ENCODE measurements at regions of chr5 and their contacts with region 1.

Region 1: DNA sequence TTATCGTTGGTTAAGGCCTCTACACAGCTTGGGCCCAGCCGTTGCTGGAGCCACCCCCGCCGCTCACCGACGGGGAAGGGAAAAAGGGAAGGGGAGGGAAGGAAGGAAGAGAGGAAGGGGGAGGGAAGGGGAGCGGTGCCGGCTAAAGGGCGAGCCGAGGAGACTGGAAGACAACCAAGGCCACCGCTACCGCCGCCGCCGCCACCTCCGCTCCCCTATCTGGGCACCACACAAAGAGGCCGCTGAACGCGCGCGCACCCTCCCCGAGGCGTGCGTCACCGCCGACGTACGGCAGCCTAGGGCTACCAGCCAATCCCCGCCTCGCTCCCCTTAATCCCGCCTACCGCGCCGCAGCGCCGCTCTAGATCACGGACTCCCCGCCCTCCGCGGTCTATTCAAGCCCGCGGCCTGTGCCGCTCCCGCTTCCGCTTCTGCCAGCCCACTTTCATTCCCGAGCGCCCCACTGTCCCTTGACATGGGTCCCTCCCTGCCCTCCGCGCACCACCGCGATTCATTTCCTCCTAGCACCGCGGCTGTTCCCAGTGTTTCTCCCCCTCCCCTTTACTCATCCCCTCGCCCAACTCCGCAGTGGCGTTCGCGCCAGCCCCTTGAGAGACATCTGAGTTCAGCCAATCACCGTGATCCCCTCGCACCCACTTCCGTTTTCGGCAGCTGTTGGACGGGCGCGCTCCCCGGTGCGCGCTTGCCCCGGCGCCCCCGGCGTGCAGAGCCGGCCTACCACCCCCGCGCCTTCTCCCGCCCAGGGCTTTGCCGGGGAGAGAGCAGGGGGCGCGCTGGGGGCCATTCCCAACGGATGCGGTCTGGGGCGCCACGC is at the start of gene HNRNPA0:
- DNase-seq: peak; percentile 98
- H3K4me3 Mint-ChIP-seq: peak within 1 kb of the TSS; percentile 87
- H3K27ac Mint-ChIP-seq: peak within 1 kb of the TSS; percentile 99
- H3K4me1 Mint-ChIP-seq: peaks cover 28% of the 10 kb centered on the region
- H3K27me3 Mint-ChIP-seq: no peaks in the 10 kb centered on the region
- CTCF ChIP-seq: no peak
- total RNA-seq, gene HNRNPA0: 30.8 and 31.8 TPM in 2 replicates

Region 2: DNA sequence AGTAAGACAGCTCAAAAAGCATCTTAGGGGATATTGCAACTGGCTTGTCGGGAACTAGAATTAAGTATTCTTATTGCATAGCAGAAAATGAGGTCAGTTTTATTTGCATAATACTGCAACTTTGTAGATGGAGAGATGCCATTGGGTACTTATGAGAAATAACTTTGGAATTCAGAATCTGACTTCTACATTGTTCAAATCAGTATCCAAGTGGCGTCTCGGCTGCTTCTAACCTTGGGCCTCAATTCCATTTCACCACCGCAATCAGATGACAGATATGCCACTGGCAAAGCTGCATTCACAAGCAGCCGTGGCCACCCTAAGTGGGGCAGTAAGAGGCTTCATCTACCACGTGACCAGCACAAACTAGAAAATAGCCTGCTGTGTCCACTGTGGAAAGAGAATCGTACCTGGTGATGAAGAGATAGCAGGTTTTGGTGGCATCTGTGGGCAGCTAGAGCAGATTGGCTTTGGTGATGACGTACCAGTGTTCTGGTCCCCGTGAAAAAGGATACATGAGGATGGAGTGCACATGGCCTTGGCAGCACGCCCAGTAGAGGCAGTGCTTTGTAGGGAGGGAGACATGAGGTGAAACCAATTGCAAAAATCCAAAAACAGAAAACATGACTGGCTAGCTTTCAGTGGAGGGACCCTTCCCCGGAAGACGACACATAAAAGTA is 135.0 kb before region 1 on chr5:
- CTCF ChIA-PET with region 1: interaction called, 690 read pairs
- POLR2A ChIA-PET with region 1: interaction called, 53 read pairs
- intact Hi-C with region 1: no loop called
- DNase-seq: peak; percentile 79
- H3K4me3 Mint-ChIP-seq: no peak overlapping the region
- H3K27ac Mint-ChIP-seq: peak overlapping the region; percentile 46
- H3K4me1 Mint-ChIP-seq: peaks cover 41% of the 10 kb centered on the region
- H3K27me3 Mint-ChIP-seq: no peaks in the 10 kb centered on the region
- CTCF ChIP-seq: no peak

Region 3: DNA sequence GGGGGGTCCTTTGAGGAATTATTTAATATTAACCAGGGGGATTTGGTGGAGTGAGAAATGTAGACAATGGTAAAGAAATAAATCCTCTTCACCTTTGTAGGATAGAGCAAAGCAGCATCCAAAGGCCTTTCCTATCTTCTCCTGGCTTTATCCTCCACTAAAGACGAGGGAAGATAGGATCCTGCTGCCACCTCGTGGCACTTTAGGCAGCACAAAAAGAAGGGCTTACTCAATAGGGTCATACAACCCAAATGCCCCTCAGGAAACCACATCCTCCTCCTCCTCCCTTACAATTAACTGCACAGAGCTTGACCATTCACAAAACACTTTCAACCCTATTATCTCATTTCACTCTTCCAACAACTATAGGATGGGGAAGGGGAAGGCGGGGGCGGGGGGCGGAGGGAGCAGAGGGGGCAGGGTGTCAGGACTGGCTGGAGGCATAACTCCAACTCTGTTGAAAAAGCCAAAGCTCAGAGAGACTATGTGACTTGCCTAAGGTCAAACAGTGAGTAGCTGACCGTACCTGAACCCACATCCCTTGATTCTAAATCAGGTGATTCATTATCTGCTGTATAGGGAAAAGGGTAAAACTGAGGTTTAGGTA is 67.9 kb after region 1 on chr5:
- CTCF ChIA-PET with region 1: interaction called, 10 read pairs
- POLR2A ChIA-PET with region 1: interaction called, 4 read pairs
- intact Hi-C with region 1: loop called (anchors 1 kb)
- DNase-seq: peak; percentile 72
- H3K4me3 Mint-ChIP-seq: no peak overlapping the region
- H3K27ac Mint-ChIP-seq: no peak overlapping the region
- H3K4me1 Mint-ChIP-seq: no peaks in the 10 kb centered on the region
- H3K27me3 Mint-ChIP-seq: peaks cover 29% of the 10 kb centered on the region
- CTCF ChIP-seq: peak; percentile 55

Region 4: GRCh38 chr5:137975208-137975607 is 220.9 kb after region 1 on chr5:
- CTCF ChIA-PET with region 1: no interaction called
- POLR2A ChIA-PET with region 1: no interaction called
- intact Hi-C with region 1: no loop called
- DNase-seq: no peak
- H3K4me3 Mint-ChIP-seq: no peak overlapping the region
- H3K27ac Mint-ChIP-seq: peak overlapping the region; percentile 49
- H3K4me1 Mint-ChIP-seq: no peaks in the 10 kb centered on the region
- H3K27me3 Mint-ChIP-seq: no peaks in the 10 kb centered on the region
- CTCF ChIP-seq: no peak

Region 5: GRCh38 chr5:138337685-138338410 is 583.5 kb after region 1 on chr5 and contains the start of gene FAM53C:
- CTCF ChIA-PET with region 1: no interaction called
- POLR2A ChIA-PET with region 1: no interaction called
- intact Hi-C with region 1: loop called (anchors 5 kb)
- DNase-seq: peak; percentile 97
- H3K4me3 Mint-ChIP-seq: peak within 1 kb of the TSS; percentile 88
- H3K27ac Mint-ChIP-seq: peak within 1 kb of the TSS; percentile 100
- H3K4me1 Mint-ChIP-seq: peaks cover 48% of the 10 kb centered on the region
- H3K27me3 Mint-ChIP-seq: no peaks in the 10 kb centered on the region
- CTCF ChIP-seq: no peak
- total RNA-seq, gene FAM53C: 37.2 and 38.9 TPM in 2 replicates

Region 6: GRCh38 chr5:138663009-138663408 is 908.7 kb after region 1 on chr5:
- CTCF ChIA-PET with region 1: no interaction called
- POLR2A ChIA-PET with region 1: no interaction called
- intact Hi-C with region 1: no loop called
- DNase-seq: peak; percentile 27
- H3K4me3 Mint-ChIP-seq: no peak overlapping the region
- H3K27ac Mint-ChIP-seq: no peak overlapping the region
- H3K4me1 Mint-ChIP-seq: peaks cover 29% of the 10 kb centered on the region
- H3K27me3 Mint-ChIP-seq: no peaks in the 10 kb centered on the region
- CTCF ChIP-seq: no peak

Measured in MCF 10A (cell line).